ENCODE measurements at regions of chr11 and their contacts with region 1.

Region 1: GRCh38 chr11:122655527-122656072 is at the start of gene UBASH3B:
- DNase-seq: peak; percentile 48
- H3K4me3 Mint-ChIP-seq: peak within 1 kb of the TSS; percentile 94
- H3K27ac Mint-ChIP-seq: peak within 1 kb of the TSS; percentile 88
- H3K4me1 Mint-ChIP-seq: peaks cover 13% of the 10 kb centered on the region
- H3K27me3 Mint-ChIP-seq: peaks cover 65% of the 10 kb centered on the region
- total RNA-seq, gene UBASH3B: 17.9 and 18.3 TPM in 2 replicates

Region 2: GRCh38 chr11:122743949-122744348 is 88.3 kb after region 1 on chr11:
- intact Hi-C with region 1: loop called (anchors 1 kb)
- DNase-seq: peak; percentile 75
- H3K4me3 Mint-ChIP-seq: no peak overlapping the region
- H3K27ac Mint-ChIP-seq: no peak overlapping the region
- H3K4me1 Mint-ChIP-seq: no peaks in the 10 kb centered on the region
- H3K27me3 Mint-ChIP-seq: peaks cover 18% of the 10 kb centered on the region

Measured in activated T-helper 1 cell treated with anti-CD3 and anti-CD28 coated beads, Interleukin-12 subunit alpha, Interleukin-12 subunit beta, Interleukin-2, Interleukin-4 antibody, amounts not matched to agents 30 ng/mL and 10 ng/mL and 1 ng/mL, durations not matched to agents 14 hours and 24 hours and 36 hours (primary cell).